ENCODE measurements at regions of chr19 and their contacts with region 1.

Region 1: GRCh38 chr19:1794424-1795172 is 17.5 kb downstream of the ATP8B3 start:
- DNase-seq: no peak
- H3K4me3 ChIP-seq: no peak overlapping the region
- CTCF ChIP-seq: no peak

Region 2: GRCh38 chr19:1540365-1540925 is 254.2 kb before region 1 on chr19:
- CTCF ChIA-PET with region 1: interaction called, 39 read pairs
- POLR2A ChIA-PET with region 1: no interaction called
- DNase-seq: no peak
- H3K4me3 ChIP-seq: no peak overlapping the region
- CTCF ChIP-seq: no peak

Region 3: DNA sequence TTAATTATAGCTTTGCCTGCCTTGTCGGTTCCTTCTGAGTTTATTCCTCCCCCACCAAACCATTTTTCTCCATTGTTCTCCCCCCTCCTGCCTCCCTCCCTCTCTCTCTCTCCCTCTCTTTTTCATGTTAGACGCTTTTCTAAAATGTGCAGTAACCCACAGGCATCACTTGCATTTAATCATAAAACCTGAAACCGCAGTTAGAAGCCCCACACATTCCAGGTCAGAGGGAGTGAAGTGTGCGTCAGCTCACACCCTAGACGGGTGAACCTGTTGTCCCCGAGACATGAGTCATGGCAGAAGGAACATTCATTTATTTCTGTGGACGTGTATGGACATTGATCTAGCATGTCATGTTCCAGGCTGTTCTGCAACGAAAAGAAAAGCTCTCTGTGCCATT is 21.4 kb before region 1 on chr19:
- CTCF ChIA-PET with region 1: interaction called, 12 read pairs
- POLR2A ChIA-PET with region 1: no interaction called
- DNase-seq: no peak
- H3K4me3 ChIP-seq: no peak overlapping the region
- CTCF ChIP-seq: no peak

Region 4: DNA sequence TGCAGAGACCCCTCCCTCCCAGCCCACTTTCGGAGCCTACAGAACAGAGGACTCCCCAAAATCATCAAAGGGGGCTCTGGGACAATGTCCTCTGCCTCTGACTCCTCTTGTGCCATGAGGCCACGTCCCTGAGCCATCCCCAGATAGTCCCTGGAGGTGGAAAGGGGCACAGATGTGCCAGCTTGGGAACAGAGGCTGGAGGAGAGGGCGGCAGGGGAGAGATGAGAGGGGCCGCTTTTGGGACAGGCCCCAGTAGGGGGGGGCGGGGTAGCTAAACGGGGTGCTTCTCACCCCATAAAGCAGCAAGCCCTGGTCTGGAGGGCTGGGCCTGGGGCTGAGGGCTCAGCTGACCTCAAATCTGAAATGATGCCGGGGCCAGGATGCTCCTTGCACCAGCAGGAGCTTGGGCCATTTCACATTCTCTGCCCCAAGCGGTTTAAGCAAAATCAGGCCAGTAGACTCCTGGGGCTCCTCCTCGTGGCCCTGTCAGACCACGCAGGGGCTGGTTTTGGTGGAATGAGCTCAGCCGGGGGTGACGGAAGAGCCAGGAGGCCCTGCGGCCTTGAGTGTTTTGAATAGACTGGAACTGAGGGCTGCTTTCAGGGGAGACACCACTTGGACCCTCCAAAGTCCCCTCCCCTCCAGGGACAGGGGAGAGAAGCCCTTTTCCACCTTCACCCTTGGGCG is 14.2 kb before region 1 on chr19:
- CTCF ChIA-PET with region 1: interaction called, 60 read pairs
- POLR2A ChIA-PET with region 1: no interaction called
- DNase-seq: no peak
- H3K4me3 ChIP-seq: no peak overlapping the region
- CTCF ChIP-seq: peak; percentile 19

Region 5: DNA sequence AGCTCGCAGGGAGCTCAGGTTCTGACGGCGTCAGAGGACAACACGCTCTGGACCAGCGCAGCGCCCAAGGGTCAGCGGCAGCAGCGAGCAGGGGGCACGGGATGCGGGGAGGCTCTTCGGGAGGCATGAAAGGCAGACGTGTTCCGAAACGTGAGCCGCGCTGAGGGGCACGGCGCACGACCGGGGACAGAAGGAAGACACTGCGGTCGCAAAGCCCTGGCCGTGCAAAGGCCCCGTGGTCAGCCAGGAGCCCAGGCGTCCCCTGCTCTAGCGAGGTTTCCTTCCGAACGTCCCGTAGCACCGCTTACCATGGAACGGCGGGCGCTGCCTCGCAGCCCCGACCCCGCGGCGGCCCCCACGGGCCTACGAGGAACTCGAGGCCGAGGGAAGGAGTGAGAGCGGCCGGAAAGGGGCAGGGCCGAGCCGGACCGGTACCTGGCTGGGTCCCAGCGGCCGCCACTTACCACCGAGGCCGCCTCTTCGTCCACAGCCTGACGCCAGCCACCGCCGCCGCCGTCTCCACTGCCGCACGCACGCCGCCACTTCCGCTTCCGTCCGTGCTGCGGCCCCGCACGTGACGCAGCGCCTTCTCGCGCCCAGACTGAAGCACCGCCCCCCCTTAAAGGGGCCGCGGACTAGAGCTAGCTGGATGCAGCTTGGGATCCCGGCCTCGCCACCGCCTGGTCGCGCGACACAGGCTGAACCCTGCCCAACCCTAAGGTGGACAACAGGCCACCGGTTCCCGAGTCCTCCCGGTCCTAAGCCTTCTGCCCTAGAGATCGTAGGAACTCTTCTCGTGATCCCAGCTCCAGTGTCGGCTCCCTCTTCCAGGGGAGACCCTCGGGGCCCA is 81.3 kb after region 1 on chr19:
- CTCF ChIA-PET with region 1: no interaction called
- POLR2A ChIA-PET with region 1: no interaction called
- DNase-seq: no peak
- H3K4me3 ChIP-seq: peak overlapping the region; percentile 98
- CTCF ChIP-seq: no peak

Measured in AG04449 (cell line).